ENCODE measurements at regions of chr1 and their contacts with region 1.

Region 1: DNA sequence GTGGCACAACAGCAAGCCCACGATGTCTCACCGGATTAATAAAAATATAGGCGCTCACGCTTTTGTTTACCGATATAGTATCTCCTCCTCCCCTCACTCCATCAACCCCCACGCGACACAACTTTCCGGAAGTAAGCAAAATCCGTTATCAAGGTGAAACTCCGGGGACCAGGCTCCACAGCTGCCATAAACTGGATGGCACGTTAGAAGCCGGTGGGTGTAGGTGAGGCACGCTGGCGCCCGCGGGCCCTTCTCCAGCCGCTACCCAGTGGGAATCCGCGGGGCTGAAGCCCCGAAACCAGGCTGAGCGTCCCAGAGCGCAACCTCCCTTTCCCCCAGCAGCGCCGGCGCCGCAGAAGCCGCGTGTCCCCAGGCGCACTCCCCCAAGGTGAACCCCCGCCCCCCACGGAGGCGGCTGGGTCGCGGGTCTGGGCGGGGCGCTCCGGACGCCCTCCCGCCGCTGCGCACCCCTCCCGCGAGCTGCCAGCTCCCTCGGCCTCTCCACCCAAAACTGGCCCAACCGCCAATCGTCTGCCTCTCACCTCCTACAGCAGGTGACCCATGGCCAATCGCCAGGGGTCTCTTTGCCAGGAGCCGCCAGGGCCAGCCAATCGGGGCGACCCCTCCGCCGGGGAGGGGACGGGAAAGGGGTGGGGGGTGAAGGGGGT is 112.4 kb downstream of the OSBPL9 start:
- DNase-seq: peak; percentile 99 to 100 (median 100)
- ATAC-seq: peak; percentile 84
- H3K4me3 ChIP-seq: peak overlapping the region; percentile 73
- H3K27ac ChIP-seq: peak overlapping the region; percentile 88
- H3K4me1 ChIP-seq: peaks cover 28 to 34% of the 10 kb centered on the region in 2 experiments
- H3K27me3 ChIP-seq: no peaks in the 10 kb centered on the region
- CTCF ChIP-seq: no peak
- EP300 ChIP-seq: peak; percentile 32; the same call in 1 of the 2 replicates
- POLR2A ChIP-seq: peak; percentile 94
- RAD21 ChIP-seq: 0 out of 4 replicates have a peak, but pooled peaks of 1 of the 2 experiments have one; percentile 10

Region 2: GRCh38 chr1:50968158-50968820 is 761.0 kb before region 1 on chr1:
- CTCF ChIA-PET with region 1: no interaction called
- POLR2A ChIA-PET with region 1: no interaction called
- in situ Hi-C with region 1: no loop called
- intact Hi-C with region 1: loop called (anchors 10 kb)
- DNase-seq: peak; percentile 93 to 97 (median 96)
- ATAC-seq: peak; percentile 75
- H3K4me3 ChIP-seq: peak overlapping the region; percentile 78
- H3K27ac ChIP-seq: peak overlapping the region; percentile 92
- H3K4me1 ChIP-seq: peaks cover 3 to 15% of the 10 kb centered on the region in 2 experiments; a peak in 3 of 5 replicates
- H3K27me3 ChIP-seq: no peaks in the 10 kb centered on the region
- CTCF ChIP-seq: peak; percentile 42 to 67 (median 59); a peak in 4 of 6 replicates
- EP300 ChIP-seq: peak; percentile 55
- POLR2A ChIP-seq: peak; percentile 89
- RAD21 ChIP-seq: peak; percentile 40 to 50; a peak in 3 of 4 replicates

Region 3: GRCh38 chr1:51719146-51719545 is 10.1 kb before region 1 on chr1:
- CTCF ChIA-PET with region 1: no interaction called
- POLR2A ChIA-PET with region 1: interaction called, 25 read pairs
- in situ Hi-C with region 1: no loop called
- intact Hi-C with region 1: no loop called
- DNase-seq: no peak
- ATAC-seq: peak; percentile 70; the same call in 2 of the 3 replicates
- H3K4me3 ChIP-seq: no peak overlapping the region
- H3K27ac ChIP-seq: no peak overlapping the region
- H3K4me1 ChIP-seq: no peaks in the 10 kb centered on the region
- H3K27me3 ChIP-seq: no peaks in the 10 kb centered on the region
- CTCF ChIP-seq: peak in 1 of 3 experiments; percentile 51; a peak in 2 of 6 replicates
- EP300 ChIP-seq: no peak
- POLR2A ChIP-seq: no peak
- RAD21 ChIP-seq: peak; percentile 14 to 50; a peak in 2 of 4 replicates